Caco-2 (cell line): ENCODE measurements at regions of chr3 and their contacts with region 1.

Region 1: DNA sequence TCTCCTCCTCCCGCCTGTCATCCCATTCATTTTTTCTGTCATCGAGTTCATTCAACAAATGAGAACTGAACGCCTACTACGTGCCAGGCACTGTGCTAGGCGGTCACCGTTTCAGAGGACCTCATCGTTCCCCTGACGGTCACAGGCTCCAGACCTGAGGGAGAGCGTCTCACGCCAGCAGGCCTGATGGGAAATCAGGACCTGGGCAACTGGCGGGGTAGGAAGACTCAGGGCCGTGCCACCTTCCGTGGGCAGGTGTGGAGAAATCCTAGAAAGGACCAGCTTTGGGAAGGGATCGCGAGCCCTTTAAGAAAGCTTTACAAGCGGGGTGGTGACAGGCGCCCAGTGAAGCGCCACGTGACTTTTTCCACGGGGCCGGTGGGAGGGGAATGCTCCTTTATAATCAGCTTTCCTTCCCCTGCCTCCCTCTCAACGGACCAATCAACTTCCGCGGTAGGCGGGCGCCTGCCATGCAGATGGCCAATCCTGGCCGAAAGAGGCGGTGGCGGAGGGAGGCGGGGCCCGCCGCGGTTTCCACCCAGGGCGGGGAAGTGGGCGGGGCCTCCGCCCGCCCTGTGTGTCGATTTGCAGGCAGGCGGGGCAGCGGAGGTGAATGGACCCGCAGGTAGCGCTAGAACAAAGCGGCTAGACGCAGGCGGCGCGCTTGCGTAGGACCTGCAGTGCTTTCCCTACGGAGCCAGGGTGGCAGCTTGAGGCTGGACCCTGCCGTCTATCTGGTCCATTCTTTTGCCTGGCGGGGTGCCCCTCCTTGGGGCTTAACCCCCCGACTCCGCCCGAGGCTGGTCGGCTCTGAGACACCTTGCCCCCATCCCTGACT is 816 bp upstream of the DUSP7 start:
- DNase-seq: peak; percentile 98 to 99
- H3K4me3 ChIP-seq: peak overlapping the region; percentile 82
- H3K4me3 Mint-ChIP-seq: peak overlapping the region; percentile 89
- H3K27ac Mint-ChIP-seq: peak overlapping the region; percentile 89
- H3K4me1 ChIP-seq: peaks cover 4% of the 10 kb centered on the region; the same call in 1 of the 2 replicates
- H3K4me1 Mint-ChIP-seq: no peaks in the 10 kb centered on the region
- H3K27me3 ChIP-seq: no peaks in the 10 kb centered on the region
- H3K27me3 Mint-ChIP-seq: no peaks in the 10 kb centered on the region
- CTCF ChIP-seq: peak in 1 of 2 experiments; percentile 21

Region 2: GRCh38 chr3:51982782-51983577 is 74.2 kb before region 1 on chr3 and contains the start of gene ACY1:
- CTCF ChIA-PET with region 1: interaction called, 4 read pairs
- POLR2A ChIA-PET with region 1: interaction called, 10 read pairs
- intact Hi-C with region 1: no loop called
- DNase-seq: peak; percentile 95 to 96
- H3K4me3 ChIP-seq: peak within 1 kb of the TSS; percentile 46
- H3K4me3 Mint-ChIP-seq: peak within 1 kb of the TSS; percentile 99
- H3K27ac Mint-ChIP-seq: peak within 1 kb of the TSS; percentile 86
- H3K4me1 ChIP-seq: peaks cover 46% of the 10 kb centered on the region
- H3K4me1 Mint-ChIP-seq: peaks cover 15% of the 10 kb centered on the region
- H3K27me3 ChIP-seq: no peaks in the 10 kb centered on the region
- H3K27me3 Mint-ChIP-seq: no peaks in the 10 kb centered on the region
- CTCF ChIP-seq: peak in 1 of 2 experiments; percentile 0
- total RNA-seq, gene ACY1: 62.4 and 67.9 TPM in 2 replicates

Region 3: GRCh38 chr3:52001443-52001974 is 55.7 kb before region 1 on chr3:
- CTCF ChIA-PET with region 1: interaction called, 11 read pairs
- POLR2A ChIA-PET with region 1: interaction called, 3 read pairs
- intact Hi-C with region 1: loop called (anchors 1 kb)
- DNase-seq: peak; percentile 87 to 91
- H3K4me3 ChIP-seq: no peak overlapping the region
- H3K4me3 Mint-ChIP-seq: peak overlapping the region; percentile 37
- H3K27ac Mint-ChIP-seq: no peak overlapping the region
- H3K4me1 ChIP-seq: peaks cover 8% of the 10 kb centered on the region
- H3K4me1 Mint-ChIP-seq: peaks cover 9% of the 10 kb centered on the region
- H3K27me3 ChIP-seq: no peaks in the 10 kb centered on the region
- H3K27me3 Mint-ChIP-seq: no peaks in the 10 kb centered on the region
- CTCF ChIP-seq: peak; percentile 95 to 98

Region 4: DNA sequence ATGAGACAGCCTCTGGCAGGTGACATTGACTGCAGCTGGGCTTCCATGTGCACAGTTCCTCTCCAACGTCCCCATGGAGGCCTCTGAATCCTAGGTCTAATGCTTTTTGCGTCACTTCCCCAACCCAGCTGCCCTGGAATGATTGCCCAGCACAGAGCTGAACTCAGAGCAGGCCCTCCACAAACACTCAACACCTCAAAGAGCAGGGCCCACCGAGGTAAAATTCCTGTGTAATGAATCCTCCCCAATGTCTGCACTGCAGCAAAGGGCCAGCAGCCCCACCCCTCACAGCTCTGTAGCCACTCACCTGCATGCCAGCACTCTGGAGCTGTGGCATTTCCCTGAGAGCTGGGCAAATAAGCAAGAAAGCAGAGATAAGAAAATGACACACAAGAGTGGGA is 41.8 kb after region 1 on chr3:
- CTCF ChIA-PET with region 1: interaction called, 3 read pairs
- POLR2A ChIA-PET with region 1: no interaction called
- intact Hi-C with region 1: loop called (anchors 1 kb)
- DNase-seq: peak in 1 of 2 experiments; percentile 24
- H3K4me3 ChIP-seq: no peak overlapping the region
- H3K4me3 Mint-ChIP-seq: no peak overlapping the region
- H3K27ac Mint-ChIP-seq: no peak overlapping the region
- H3K4me1 ChIP-seq: no peaks in the 10 kb centered on the region
- H3K4me1 Mint-ChIP-seq: no peaks in the 10 kb centered on the region
- H3K27me3 ChIP-seq: no peaks in the 10 kb centered on the region
- H3K27me3 Mint-ChIP-seq: no peaks in the 10 kb centered on the region
- CTCF ChIP-seq: no peak

Region 5: GRCh38 chr3:52123106-52123725 is 66.0 kb after region 1 on chr3:
- CTCF ChIA-PET with region 1: interaction called, 10 read pairs
- POLR2A ChIA-PET with region 1: interaction called, 4 read pairs
- intact Hi-C with region 1: loop called (anchors 2 kb)
- DNase-seq: peak; percentile 47 to 73
- H3K4me3 ChIP-seq: no peak overlapping the region
- H3K4me3 Mint-ChIP-seq: no peak overlapping the region
- H3K27ac Mint-ChIP-seq: no peak overlapping the region
- H3K4me1 ChIP-seq: peaks cover 7% of the 10 kb centered on the region; the same call in 1 of the 2 replicates
- H3K4me1 Mint-ChIP-seq: no peaks in the 10 kb centered on the region
- H3K27me3 ChIP-seq: no peaks in the 10 kb centered on the region
- H3K27me3 Mint-ChIP-seq: no peaks in the 10 kb centered on the region
- CTCF ChIP-seq: peak; percentile 69 to 94

Region 6: DNA sequence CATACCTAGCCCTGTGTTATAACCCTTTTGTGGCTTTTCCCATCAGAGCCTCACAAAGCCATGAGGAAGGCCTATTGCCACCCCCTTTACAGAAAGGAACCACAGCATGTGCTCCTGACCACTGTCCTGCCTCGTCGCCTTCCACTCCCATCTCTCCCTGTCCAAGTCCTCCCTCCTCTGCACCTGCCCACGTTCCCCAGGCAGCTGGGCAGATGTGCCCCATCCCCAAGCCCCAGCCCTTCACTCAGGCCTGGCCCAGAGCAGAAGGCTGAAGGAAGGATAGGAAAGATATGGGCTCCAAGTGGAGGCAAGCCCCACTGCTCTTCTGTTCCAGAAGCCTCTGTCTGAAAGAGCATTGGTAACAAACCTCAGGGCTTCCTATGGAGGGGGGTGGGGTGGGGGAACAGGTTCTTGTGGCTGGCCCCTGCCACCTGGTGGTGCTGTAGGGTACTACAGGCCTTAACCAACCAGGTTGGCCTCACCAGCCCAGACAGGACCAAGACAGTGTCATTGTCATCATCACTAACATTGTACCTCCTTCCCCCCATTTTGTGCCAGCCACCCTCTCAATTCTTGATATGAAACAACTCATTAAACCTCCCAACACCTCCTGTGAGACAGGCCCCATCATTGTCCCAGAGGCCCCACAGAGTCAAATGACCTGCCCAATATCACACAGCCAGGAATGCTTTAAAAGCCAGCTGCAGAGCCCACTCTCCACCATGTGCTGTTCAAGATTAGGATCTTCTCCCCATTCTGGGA is 87.0 kb after region 1 on chr3:
- CTCF ChIA-PET with region 1: interaction called, 3 read pairs
- POLR2A ChIA-PET with region 1: no interaction called
- intact Hi-C with region 1: loop called (anchors 2 kb)
- DNase-seq: peak; percentile 82 to 84
- H3K4me3 ChIP-seq: no peak overlapping the region
- H3K4me3 Mint-ChIP-seq: no peak overlapping the region
- H3K27ac Mint-ChIP-seq: no peak overlapping the region
- H3K4me1 ChIP-seq: no peaks in the 10 kb centered on the region
- H3K4me1 Mint-ChIP-seq: no peaks in the 10 kb centered on the region
- H3K27me3 ChIP-seq: no peaks in the 10 kb centered on the region
- H3K27me3 Mint-ChIP-seq: no peaks in the 10 kb centered on the region
- CTCF ChIP-seq: peak; percentile 91 to 97